Activated B cell treated with CpG ODN at 0.5 μM for 24 hours (primary cell): ENCODE measurements at regions of chr12 and their contacts with region 1.

Region 1: DNA sequence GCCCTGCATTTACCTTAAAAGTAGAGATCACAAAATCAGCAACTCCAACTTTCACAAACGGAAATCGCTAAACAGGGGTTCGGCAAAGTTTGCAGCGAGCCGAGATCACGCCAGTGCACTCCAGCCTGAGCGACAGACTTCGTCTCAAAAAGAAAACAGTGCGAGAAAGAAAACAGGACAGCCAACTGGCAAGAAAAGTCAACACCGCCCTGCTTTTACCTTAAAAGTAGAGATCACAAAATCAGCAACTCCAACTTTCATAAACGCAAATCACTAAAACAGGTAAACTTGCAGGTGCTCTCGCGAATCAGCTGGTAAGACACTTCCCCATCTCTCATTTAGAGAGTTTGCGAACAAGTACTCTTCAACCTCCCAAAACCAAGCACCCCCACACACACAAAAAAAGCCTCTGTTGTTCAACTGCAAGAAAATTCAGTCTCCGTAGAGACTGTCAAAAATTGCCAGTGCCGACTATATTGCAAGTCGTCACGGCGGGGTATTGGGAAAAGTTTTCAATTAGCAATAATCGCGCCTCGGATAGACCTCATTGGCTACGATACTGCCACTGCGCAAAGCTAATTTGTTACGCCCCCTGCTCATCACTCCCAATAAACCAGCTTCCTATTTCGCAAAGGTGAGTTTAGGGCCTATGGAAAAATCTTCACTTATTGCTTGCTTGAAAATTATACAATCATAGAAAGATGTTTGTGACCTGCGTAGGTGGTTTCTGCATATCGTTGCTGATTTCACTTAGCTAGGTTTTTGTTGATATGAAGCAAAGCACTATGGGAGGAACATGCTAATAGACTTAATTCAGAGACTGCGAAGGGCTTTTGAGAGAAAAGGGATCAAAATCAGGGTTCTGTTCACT is at the start of gene RNU4-1:
- DNase-seq: peak; percentile 57
- ATAC-seq: peak; percentile 60
- H3K4me3 Mint-ChIP-seq: peak within 1 kb of the TSS; percentile 15
- H3K27ac Mint-ChIP-seq: no peak within 1 kb of the TSS
- H3K4me1 Mint-ChIP-seq: peaks cover 13% of the 10 kb centered on the region
- H3K27me3 Mint-ChIP-seq: no peaks in the 10 kb centered on the region
- CTCF ChIP-seq: no peak
- total RNA-seq, gene RNU4-1: 3,997 and 4,399 TPM in 2 replicates

Region 2: GRCh38 chr12:120012067-120012621 is 280.8 kb before region 1 on chr12:
- CTCF ChIA-PET with region 1: no interaction called
- POLR2A ChIA-PET with region 1: interaction called, 3 read pairs
- intact Hi-C with region 1: loop called (anchors 5 kb)
- DNase-seq: no peak
- ATAC-seq: peak; percentile 81
- H3K4me3 Mint-ChIP-seq: peak overlapping the region; percentile 57
- H3K27ac Mint-ChIP-seq: peak overlapping the region; percentile 87
- H3K4me1 Mint-ChIP-seq: peaks cover 56% of the 10 kb centered on the region
- H3K27me3 Mint-ChIP-seq: no peaks in the 10 kb centered on the region
- CTCF ChIP-seq: no peak

Region 3: DNA sequence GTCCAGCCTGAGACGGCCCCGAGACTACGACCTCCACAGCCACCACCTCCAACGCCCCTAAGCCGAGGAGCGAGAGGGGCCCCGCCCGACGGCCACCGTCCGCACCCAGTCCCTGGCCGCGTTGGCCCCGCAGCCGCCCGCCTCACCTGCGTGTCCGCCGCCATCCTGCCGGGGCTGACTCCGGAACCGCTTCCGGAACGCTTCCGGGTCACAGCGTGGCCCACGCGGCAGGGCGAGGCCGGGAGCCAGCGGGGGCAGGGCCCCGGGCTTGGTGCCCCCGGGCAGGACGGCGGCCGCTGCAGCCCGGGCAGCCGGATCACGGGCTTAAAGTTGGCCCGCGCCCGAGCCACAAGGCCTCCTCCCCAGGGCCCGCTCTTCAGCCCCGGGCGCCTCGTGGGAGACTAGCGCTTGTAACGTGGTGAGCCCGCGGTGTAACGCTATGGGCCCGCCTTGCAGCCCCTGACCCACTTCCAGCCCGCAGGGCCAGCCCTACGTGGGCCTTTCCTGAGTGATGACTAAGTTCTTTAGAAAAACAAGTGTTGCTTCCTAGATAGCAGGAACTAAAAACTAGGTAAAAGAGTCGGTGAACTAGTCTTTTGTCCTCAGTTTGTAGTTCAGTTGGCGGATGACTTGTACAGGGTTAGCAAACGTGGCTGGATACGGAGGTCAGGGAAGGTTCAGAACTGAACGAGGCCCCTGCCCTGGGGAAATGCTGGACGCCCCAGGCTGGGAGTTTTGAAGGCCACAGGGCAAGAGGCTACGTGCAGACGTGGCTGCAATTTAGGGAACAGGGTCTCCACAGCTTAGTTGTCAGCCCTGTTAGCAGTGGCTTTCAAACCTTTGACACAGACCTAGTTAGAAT is 98.1 kb before region 1 on chr12 and contains the start of gene GCN1:
- CTCF ChIA-PET with region 1: no interaction called
- POLR2A ChIA-PET with region 1: interaction called, 262 read pairs
- intact Hi-C with region 1: no loop called
- DNase-seq: peak; percentile 97
- ATAC-seq: peak; percentile 94
- H3K4me3 Mint-ChIP-seq: peak within 1 kb of the TSS; percentile 83
- H3K27ac Mint-ChIP-seq: peak within 1 kb of the TSS; percentile 86
- H3K4me1 Mint-ChIP-seq: peaks cover 51% of the 10 kb centered on the region
- H3K27me3 Mint-ChIP-seq: no peaks in the 10 kb centered on the region
- CTCF ChIP-seq: no peak
- total RNA-seq, gene GCN1: 116 and 155 TPM in 2 replicates

Region 4: GRCh38 chr12:120249875-120250795 is 42.8 kb before region 1 on chr12:
- CTCF ChIA-PET with region 1: no interaction called
- POLR2A ChIA-PET with region 1: interaction called, 47 read pairs
- intact Hi-C with region 1: no loop called
- DNase-seq: no peak
- ATAC-seq: peak; percentile 69
- H3K4me3 Mint-ChIP-seq: no peak overlapping the region
- H3K27ac Mint-ChIP-seq: no peak overlapping the region
- H3K4me1 Mint-ChIP-seq: peaks cover 52% of the 10 kb centered on the region
- H3K27me3 Mint-ChIP-seq: peaks cover 32% of the 10 kb centered on the region
- CTCF ChIP-seq: no peak

Region 5: DNA sequence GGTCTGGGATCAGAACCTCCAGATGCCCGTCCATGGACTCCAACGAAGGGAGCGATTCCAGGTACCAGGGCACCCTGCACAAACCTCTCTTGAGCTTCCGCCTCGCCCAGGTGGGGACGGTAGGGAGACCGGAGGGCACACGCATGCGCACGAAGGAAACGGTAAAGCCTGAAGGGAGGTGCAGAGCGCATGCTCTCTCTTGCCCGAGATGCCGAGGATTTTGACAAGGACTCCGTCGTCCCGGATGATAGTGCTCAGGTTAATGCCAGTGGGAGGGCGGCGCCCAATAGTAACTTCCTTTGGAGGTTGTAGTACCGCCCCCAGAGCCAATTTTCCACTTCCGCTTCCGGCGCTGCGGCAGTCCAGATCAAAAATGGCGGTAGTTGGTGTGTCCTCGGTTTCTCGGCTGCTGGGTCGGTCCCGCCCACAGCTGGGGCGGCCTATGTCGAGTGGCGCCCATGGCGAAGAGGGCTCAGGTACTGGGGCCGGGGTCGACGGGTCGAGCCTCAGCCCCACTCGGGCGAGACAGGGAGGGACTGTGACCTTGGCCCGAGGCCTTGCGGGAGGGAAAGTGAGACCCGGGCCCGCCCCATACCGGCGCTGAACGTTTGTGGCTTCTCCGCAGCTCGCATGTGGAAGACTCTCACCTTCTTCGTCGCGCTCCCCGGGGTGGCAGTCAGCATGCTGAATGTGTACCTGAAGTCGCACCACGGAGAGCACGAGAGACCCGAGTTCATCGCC is 145.0 kb after region 1 on chr12 and contains the start of gene COX6A1:
- CTCF ChIA-PET with region 1: interaction called, 4 read pairs
- POLR2A ChIA-PET with region 1: interaction called, 27 read pairs
- intact Hi-C with region 1: loop called (anchors 5 kb)
- DNase-seq: peak; percentile 87
- ATAC-seq: peak; percentile 96
- H3K4me3 Mint-ChIP-seq: peak within 1 kb of the TSS; percentile 97
- H3K27ac Mint-ChIP-seq: peak within 1 kb of the TSS; percentile 89
- H3K4me1 Mint-ChIP-seq: peaks cover 29% of the 10 kb centered on the region
- H3K27me3 Mint-ChIP-seq: peaks cover 4% of the 10 kb centered on the region
- CTCF ChIP-seq: no peak
- total RNA-seq, gene COX6A1: 255 and 292 TPM in 2 replicates

Region 6: DNA sequence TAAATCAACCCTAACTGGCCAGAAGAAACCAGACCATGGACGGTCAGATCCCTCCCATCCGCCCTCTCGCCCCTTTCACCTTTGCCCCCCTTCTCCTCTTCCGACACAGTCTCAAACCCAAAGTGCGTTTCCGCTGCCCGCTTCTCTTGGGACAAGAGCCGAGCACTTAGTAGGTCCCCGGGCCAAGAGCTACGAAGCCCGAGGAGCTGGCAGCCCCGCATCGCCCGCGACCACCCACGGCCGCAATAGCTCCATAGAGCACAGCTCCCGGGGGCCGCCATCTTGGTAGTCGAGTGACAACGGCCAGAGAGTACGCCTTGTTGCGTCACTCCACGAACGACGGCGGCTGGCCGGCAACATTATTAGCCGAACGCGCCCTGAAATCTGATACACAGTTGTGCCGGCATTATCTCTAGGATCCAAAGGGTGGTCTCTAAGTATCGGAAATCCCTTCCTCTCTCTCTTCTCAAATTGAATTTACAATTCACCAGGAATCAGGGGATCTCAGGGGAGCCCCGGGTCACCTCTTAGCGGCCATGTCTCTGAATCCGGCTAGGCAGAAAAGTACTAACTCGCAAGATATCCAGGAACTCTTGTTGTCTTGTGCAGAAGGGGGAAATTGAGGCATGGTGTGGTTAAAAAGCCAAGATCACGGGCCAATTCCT is 236.1 kb after region 1 on chr12 and contains the start of gene COQ5:
- CTCF ChIA-PET with region 1: no interaction called
- POLR2A ChIA-PET with region 1: interaction called, 10 read pairs
- intact Hi-C with region 1: no loop called
- DNase-seq: peak; percentile 76
- ATAC-seq: peak; percentile 96
- H3K4me3 Mint-ChIP-seq: peak within 1 kb of the TSS; percentile 100
- H3K27ac Mint-ChIP-seq: peak within 1 kb of the TSS; percentile 99
- H3K4me1 Mint-ChIP-seq: peaks cover 29% of the 10 kb centered on the region
- H3K27me3 Mint-ChIP-seq: no peaks in the 10 kb centered on the region
- CTCF ChIP-seq: no peak
- total RNA-seq, gene COQ5: 25.3 and 29.5 TPM in 2 replicates